Breast epithelium (tissue), 4 donors: ENCODE measurements at regions of chr7 and their contacts with region 1.

Region 1: DNA sequence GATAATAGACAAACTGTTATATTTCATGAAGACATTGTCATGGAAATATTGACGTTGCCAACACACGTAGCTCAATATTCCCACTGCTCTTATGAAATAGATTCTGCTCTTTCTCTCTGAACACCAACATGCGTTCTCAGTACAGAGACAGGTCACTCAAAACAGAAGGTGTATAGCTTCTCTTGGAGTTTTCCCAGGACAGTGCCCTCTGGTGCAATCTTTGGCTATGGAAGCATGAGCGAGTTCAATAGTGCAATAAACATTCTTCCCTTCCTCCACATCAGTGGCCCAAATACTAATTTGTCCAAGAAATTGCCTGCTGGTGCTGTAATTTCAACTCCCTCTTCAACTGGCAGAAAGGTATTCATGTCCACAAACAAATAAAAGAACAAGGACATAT is 145.3 kb downstream of the MAGI2 start:
- DNase-seq: peak in 1 of 2 donors; percentile 53
- H3K4me3 ChIP-seq: no peak overlapping the region
- H3K27ac ChIP-seq: no peak overlapping the region
- H3K4me1 ChIP-seq: no peaks in the 10 kb centered on the region
- H3K27me3 ChIP-seq: no peaks in the 10 kb centered on the region
- CTCF ChIP-seq: no peak
- POLR2A ChIP-seq: no peak

Region 2: GRCh38 chr7:77657427-77658224 is 1650.6 kb before region 1 on chr7:
- intact Hi-C with region 1: loop called (anchors 10 kb)
- DNase-seq: no peak
- H3K4me3 ChIP-seq: no peak overlapping the region
- H3K27ac ChIP-seq: no peak overlapping the region
- H3K4me1 ChIP-seq: no peaks in the 10 kb centered on the region
- H3K27me3 ChIP-seq: no peaks in the 10 kb centered on the region
- CTCF ChIP-seq: peak in 2 of 3 donors; percentile 55 to 58
- POLR2A ChIP-seq: no peak

Region 3: GRCh38 chr7:80078159-80078731 is 770.1 kb after region 1 on chr7:
- intact Hi-C with region 1: no loop called
- DNase-seq: no peak
- H3K4me3 ChIP-seq: peak overlapping the region; percentile 29 to 50 (median 33)
- H3K27ac ChIP-seq: no peak overlapping the region
- H3K4me1 ChIP-seq: no peaks in the 10 kb centered on the region
- H3K27me3 ChIP-seq: no peaks in the 10 kb centered on the region
- CTCF ChIP-seq: no peak
- POLR2A ChIP-seq: no peak